ENCODE measurements at regions of chr11 and their contacts with region 1.

Region 1: GRCh38 chr11:46295312-46296058 is 18.0 kb downstream of the CREB3L1 start:
- DNase-seq: peak; percentile 65 to 82 (median 80)
- ATAC-seq: peak; percentile 98
- H3K4me3 ChIP-seq: peak overlapping the region; percentile 78
- H3K4me3 Mint-ChIP-seq: peak overlapping the region; percentile 83 to 92 (median 86)
- H3K27ac ChIP-seq: peak overlapping the region; percentile 34
- H3K27ac Mint-ChIP-seq: peak overlapping the region in 3 of 9 donors; percentile 32 to 48 (median 38)
- H3K4me1 ChIP-seq: peaks cover 5 to 7% of the 10 kb centered on the region in 2 donors
- H3K4me1 Mint-ChIP-seq: peaks cover 0 to 15% (median 7%) of the 10 kb centered on the region in 7 donors
- H3K27me3 ChIP-seq: peaks cover 5 to 6% of the 10 kb centered on the region in 2 donors
- H3K27me3 Mint-ChIP-seq: peaks cover 0 to 35% (median 5%) of the 10 kb centered on the region in 5 donors

Region 2: DNA sequence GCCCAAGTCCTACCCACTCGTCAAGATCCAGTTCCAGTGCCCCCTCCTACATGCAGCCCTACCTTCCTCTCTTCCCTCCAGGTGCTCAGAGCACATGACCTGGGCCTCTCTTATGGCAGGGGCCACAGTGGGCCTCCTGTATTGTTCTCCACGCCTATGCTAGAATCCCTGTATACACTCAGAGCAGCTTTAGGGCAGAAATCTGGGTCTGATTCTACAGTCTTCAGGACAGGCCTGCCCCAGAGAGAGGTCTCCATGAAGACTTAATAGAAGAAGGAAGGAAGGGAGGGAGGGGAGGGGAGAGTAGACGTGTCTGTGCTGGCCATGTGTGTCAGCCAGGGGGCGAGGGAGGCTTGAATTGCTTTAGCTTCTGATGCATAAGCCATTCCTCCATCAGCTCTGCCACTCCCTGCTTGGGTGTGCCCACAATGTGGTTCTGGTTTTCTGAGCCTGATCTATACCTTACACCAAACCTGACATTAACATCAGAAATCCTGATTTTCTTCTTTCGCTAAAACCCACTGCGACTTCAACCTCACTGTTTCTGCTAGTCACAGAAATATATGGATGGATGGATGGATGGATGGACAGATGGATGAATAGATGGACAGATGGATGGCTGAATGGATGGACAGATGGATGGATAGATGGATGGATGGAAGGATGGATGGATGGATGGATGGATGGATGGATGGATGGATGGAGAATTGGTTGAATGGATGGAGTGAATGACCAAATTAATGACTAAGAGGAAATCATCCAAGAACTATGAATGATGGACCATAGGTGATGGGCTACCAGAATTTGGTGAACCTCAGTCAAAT is 1205.6 kb before region 1 on chr11:
- CTCF ChIA-PET with region 1: no interaction called
- POLR2A ChIA-PET with region 1: no interaction called
- intact Hi-C with region 1: no loop called
- DNase-seq: no peak
- ATAC-seq: no peak
- H3K4me3 ChIP-seq: no peak overlapping the region
- H3K4me3 Mint-ChIP-seq: no peak overlapping the region
- H3K27ac ChIP-seq: no peak overlapping the region
- H3K27ac Mint-ChIP-seq: no peak overlapping the region
- H3K4me1 ChIP-seq: peaks cover 3 to 31% of the 10 kb centered on the region in 2 donors
- H3K4me1 Mint-ChIP-seq: peaks cover 0 to 32% (median 10%) of the 10 kb centered on the region in 7 donors
- H3K27me3 ChIP-seq: no peaks in the 10 kb centered on the region
- H3K27me3 Mint-ChIP-seq: peaks cover 0 to 15% (median 0%) of the 10 kb centered on the region in 5 donors

Region 3: GRCh38 chr11:46277622-46278386 is 17.7 kb before region 1 on chr11 and contains the start of gene CREB3L1:
- CTCF ChIA-PET with region 1: no interaction called
- POLR2A ChIA-PET with region 1: no interaction called
- intact Hi-C with region 1: loop called in 1 of 2 experiments (anchors 2 kb)
- DNase-seq: no peak
- ATAC-seq: no peak
- H3K4me3 ChIP-seq: no peak within 1 kb of the TSS
- H3K4me3 Mint-ChIP-seq: peak within 1 kb of the TSS in 9 of 10 donors; percentile 48 to 77 (median 66)
- H3K27ac ChIP-seq: no peak within 1 kb of the TSS
- H3K27ac Mint-ChIP-seq: no peak within 1 kb of the TSS
- H3K4me1 ChIP-seq: peaks cover 0 to 8% of the 10 kb centered on the region in 2 donors
- H3K4me1 Mint-ChIP-seq: peaks cover under 1 to 33% (median 13%) of the 10 kb centered on the region in 7 donors
- H3K27me3 ChIP-seq: peaks cover 0 to 18% of the 10 kb centered on the region in 2 donors
- H3K27me3 Mint-ChIP-seq: peaks cover 28 to 58% (median 32%) of the 10 kb centered on the region in 5 donors
- total RNA-seq, gene CREB3L1: not detected

Region 4: GRCh38 chr11:46445920-46446771 is 150.7 kb after region 1 on chr11:
- CTCF ChIA-PET with region 1: no interaction called
- POLR2A ChIA-PET with region 1: no interaction called
- intact Hi-C with region 1: no loop called
- DNase-seq: no peak
- ATAC-seq: no peak
- H3K4me3 ChIP-seq: no peak overlapping the region
- H3K4me3 Mint-ChIP-seq: no peak overlapping the region
- H3K27ac ChIP-seq: no peak overlapping the region
- H3K27ac Mint-ChIP-seq: peak overlapping the region in 4 of 9 donors; percentile 15 to 39 (median 34)
- H3K4me1 ChIP-seq: no peaks in the 10 kb centered on the region
- H3K4me1 Mint-ChIP-seq: peaks cover 2 to 47% (median 24%) of the 10 kb centered on the region in 7 donors
- H3K27me3 ChIP-seq: no peaks in the 10 kb centered on the region
- H3K27me3 Mint-ChIP-seq: no peaks in the 10 kb centered on the region